ENCODE measurements at regions of chr7 and their contacts with region 1.

Region 1: DNA sequence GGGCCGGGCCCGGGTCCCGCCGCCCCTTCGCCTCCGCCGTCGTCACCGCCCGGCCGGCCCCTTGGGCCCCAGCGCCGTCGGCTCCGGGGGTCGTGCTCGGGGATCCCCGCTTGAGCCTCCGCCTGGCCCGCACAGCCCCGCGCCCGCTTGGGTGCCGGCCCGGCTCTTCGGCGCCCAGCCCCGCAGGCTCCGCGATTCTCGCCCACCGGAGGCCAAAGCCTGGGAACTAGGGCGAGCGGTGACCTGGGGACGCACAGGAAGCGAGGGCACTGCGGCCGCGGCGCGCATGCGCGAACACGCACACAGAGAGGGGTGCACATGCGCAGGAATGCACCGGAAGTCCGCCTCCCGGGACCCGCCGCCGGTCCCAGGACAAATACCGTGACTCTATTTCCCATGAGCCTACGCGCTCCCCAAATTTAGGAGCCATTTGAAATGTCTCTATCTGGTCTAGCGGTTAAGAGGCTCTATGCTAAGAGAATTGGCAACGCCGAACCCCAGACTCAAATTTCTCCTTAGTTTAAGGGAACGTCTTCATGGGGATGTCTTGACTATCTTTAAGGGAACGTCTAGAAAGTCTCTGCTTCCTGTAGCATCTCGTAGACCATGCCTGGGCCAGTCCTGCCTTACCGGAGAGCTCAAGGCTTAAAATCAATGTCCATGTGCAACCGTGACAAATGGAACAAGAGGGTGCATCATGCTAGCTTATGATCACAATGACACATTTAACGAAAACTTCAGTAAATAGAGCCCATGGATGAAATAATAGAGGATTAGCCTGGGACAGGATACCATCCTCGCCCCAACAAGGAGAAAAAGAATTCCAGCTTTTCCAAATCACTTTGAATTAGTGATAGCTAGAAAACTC is at the start of gene ZNF12:
- DNase-seq: peak; percentile 88 to 96 (median 92)
- ATAC-seq: peak; percentile 93
- H3K4me3 ChIP-seq: peak within 1 kb of the TSS; percentile 68
- H3K4me3 Mint-ChIP-seq: peak within 1 kb of the TSS; percentile 92 to 98 (median 94)
- H3K27ac ChIP-seq: peak within 1 kb of the TSS; percentile 85
- H3K27ac Mint-ChIP-seq: peak within 1 kb of the TSS; percentile 88 to 96 (median 92)
- H3K4me1 ChIP-seq: peaks cover 26 to 33% of the 10 kb centered on the region in 2 donors
- H3K4me1 Mint-ChIP-seq: peaks cover 34 to 55% (median 38%) of the 10 kb centered on the region in 7 donors
- H3K27me3 ChIP-seq: no peaks in the 10 kb centered on the region
- H3K27me3 Mint-ChIP-seq: peaks cover 0 to 8% (median 5%) of the 10 kb centered on the region in 5 donors
- total RNA-seq, gene ZNF12: 26.2 to 58.1 (median 29.3) TPM

Region 2: GRCh38 chr7:5780801-5781496 is 926.0 kb before region 1 on chr7:
- CTCF ChIA-PET with region 1: no interaction called
- POLR2A ChIA-PET with region 1: no interaction called
- intact Hi-C with region 1: loop called in 1 of 2 experiments (anchors 1 kb)
- DNase-seq: peak in 7 of 9 donors; percentile 12 to 60 (median 30)
- ATAC-seq: peak; percentile 35
- H3K4me3 ChIP-seq: peak overlapping the region; percentile 66
- H3K4me3 Mint-ChIP-seq: peak overlapping the region; percentile 72 to 92 (median 84)
- H3K27ac ChIP-seq: peak overlapping the region; percentile 92
- H3K27ac Mint-ChIP-seq: peak overlapping the region; percentile 66 to 93 (median 88)
- H3K4me1 ChIP-seq: peaks cover 24 to 25% of the 10 kb centered on the region in 2 donors
- H3K4me1 Mint-ChIP-seq: peaks cover 28 to 47% (median 42%) of the 10 kb centered on the region in 7 donors
- H3K27me3 ChIP-seq: no peaks in the 10 kb centered on the region
- H3K27me3 Mint-ChIP-seq: no peaks in the 10 kb centered on the region

Region 3: GRCh38 chr7:6589829-6590644 is 116.9 kb before region 1 on chr7 and contains the start of gene INTS15:
- CTCF ChIA-PET with region 1: no interaction called
- POLR2A ChIA-PET with region 1: no interaction called
- intact Hi-C with region 1: loop called (anchors 1 kb)
- DNase-seq: peak; percentile 72 to 95 (median 92)
- ATAC-seq: peak; percentile 98
- H3K4me3 ChIP-seq: peak within 1 kb of the TSS; percentile 77
- H3K4me3 Mint-ChIP-seq: peak within 1 kb of the TSS; percentile 88 to 98 (median 94)
- H3K27ac ChIP-seq: peak within 1 kb of the TSS; percentile 88
- H3K27ac Mint-ChIP-seq: peak within 1 kb of the TSS; percentile 90 to 97 (median 94)
- H3K4me1 ChIP-seq: peaks cover 14 to 19% of the 10 kb centered on the region in 2 donors
- H3K4me1 Mint-ChIP-seq: peaks cover 10 to 35% (median 18%) of the 10 kb centered on the region in 7 donors
- H3K27me3 ChIP-seq: no peaks in the 10 kb centered on the region
- H3K27me3 Mint-ChIP-seq: no peaks in the 10 kb centered on the region
- total RNA-seq, gene INTS15: 39.9 to 69.1 (median 56.5) TPM

Region 4: GRCh38 chr7:6637544-6638229 is 69.2 kb before region 1 on chr7:
- CTCF ChIA-PET with region 1: no interaction called
- POLR2A ChIA-PET with region 1: no interaction called
- intact Hi-C with region 1: loop called (anchors 1 kb)
- DNase-seq: peak; percentile 23 to 72 (median 42)
- ATAC-seq: peak; percentile 73
- H3K4me3 ChIP-seq: peak overlapping the region; percentile 52
- H3K4me3 Mint-ChIP-seq: peak overlapping the region; percentile 81 to 90 (median 87)
- H3K27ac ChIP-seq: peak overlapping the region; percentile 76
- H3K27ac Mint-ChIP-seq: peak overlapping the region; percentile 76 to 95 (median 87)
- H3K4me1 ChIP-seq: peaks cover 10 to 14% of the 10 kb centered on the region in 2 donors
- H3K4me1 Mint-ChIP-seq: peaks cover 24 to 32% (median 27%) of the 10 kb centered on the region in 7 donors
- H3K27me3 ChIP-seq: no peaks in the 10 kb centered on the region
- H3K27me3 Mint-ChIP-seq: no peaks in the 10 kb centered on the region

Region 5: GRCh38 chr7:6680146-6680545 is 26.8 kb before region 1 on chr7:
- CTCF ChIA-PET with region 1: no interaction called
- POLR2A ChIA-PET with region 1: no interaction called
- intact Hi-C with region 1: no loop called
- DNase-seq: no peak
- ATAC-seq: no peak
- H3K4me3 ChIP-seq: no peak overlapping the region
- H3K4me3 Mint-ChIP-seq: no peak overlapping the region
- H3K27ac ChIP-seq: no peak overlapping the region
- H3K27ac Mint-ChIP-seq: no peak overlapping the region
- H3K4me1 ChIP-seq: no peaks in the 10 kb centered on the region
- H3K4me1 Mint-ChIP-seq: no peaks in the 10 kb centered on the region
- H3K27me3 ChIP-seq: no peaks in the 10 kb centered on the region
- H3K27me3 Mint-ChIP-seq: no peaks in the 10 kb centered on the region

Region 6: DNA sequence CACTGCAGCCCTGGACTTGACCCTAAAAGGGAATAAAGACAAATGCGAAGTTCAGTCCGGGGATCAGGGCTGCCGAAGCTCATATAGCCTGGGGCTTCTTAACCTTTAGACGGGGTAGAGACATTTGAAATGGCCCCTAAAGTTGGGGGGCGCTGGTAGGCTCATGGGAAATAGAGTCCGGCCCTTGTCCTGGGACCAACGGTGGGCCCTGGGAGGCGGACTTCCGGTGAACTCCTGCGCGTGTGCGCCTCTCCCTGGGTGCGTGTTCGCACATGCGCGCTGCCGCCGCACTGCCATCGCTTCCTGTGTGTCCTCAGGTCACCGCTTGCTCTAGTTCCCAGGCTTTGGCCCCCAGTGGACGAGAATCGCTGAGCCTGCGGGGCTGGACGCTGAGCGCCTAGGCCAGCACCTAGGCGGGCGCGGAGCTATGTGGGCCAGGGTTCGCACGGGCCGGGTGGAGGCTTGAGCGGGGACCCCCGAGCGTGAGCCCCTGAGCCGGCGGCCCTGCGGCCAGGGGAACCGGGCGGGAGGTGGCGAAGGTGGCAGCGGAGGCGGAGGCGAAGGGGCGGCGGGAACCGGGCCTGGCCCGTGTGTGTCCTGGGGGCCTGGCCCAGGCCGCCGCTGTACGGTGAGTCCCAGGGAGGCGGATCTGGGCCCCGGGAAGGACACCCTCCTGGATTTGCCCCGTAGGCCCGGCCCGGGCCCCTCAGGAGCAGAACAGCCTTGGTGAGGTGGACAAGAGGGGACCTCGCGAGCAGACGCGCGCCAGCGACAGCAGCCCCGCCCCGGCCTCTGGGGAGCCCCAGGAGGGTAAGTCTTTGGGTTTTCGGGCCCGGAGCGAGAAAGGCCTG is 22.8 kb after region 1 on chr7:
- CTCF ChIA-PET with region 1: interaction called, 3 read pairs
- POLR2A ChIA-PET with region 1: interaction called, 3 read pairs
- intact Hi-C with region 1: loop called (anchors 1 kb)
- DNase-seq: peak; percentile 68 to 84 (median 76)
- ATAC-seq: peak; percentile 97
- H3K4me3 ChIP-seq: peak overlapping the region; percentile 73
- H3K4me3 Mint-ChIP-seq: peak overlapping the region; percentile 91 to 99 (median 94)
- H3K27ac ChIP-seq: peak overlapping the region; percentile 91
- H3K27ac Mint-ChIP-seq: peak overlapping the region; percentile 88 to 96 (median 92)
- H3K4me1 ChIP-seq: peaks cover 4 to 8% of the 10 kb centered on the region in 2 donors
- H3K4me1 Mint-ChIP-seq: peaks cover 13 to 42% (median 26%) of the 10 kb centered on the region in 7 donors
- H3K27me3 ChIP-seq: no peaks in the 10 kb centered on the region
- H3K27me3 Mint-ChIP-seq: peaks cover 0 to 4% (median 0%) of the 10 kb centered on the region in 5 donors

Measured in naive thymus-derived CD4-positive, alpha-beta T cell (primary cell).